Colonic mucosa (tissue), 4 donors: ENCODE measurements at regions of chr12 and their contacts with region 1.

Region 1: DNA sequence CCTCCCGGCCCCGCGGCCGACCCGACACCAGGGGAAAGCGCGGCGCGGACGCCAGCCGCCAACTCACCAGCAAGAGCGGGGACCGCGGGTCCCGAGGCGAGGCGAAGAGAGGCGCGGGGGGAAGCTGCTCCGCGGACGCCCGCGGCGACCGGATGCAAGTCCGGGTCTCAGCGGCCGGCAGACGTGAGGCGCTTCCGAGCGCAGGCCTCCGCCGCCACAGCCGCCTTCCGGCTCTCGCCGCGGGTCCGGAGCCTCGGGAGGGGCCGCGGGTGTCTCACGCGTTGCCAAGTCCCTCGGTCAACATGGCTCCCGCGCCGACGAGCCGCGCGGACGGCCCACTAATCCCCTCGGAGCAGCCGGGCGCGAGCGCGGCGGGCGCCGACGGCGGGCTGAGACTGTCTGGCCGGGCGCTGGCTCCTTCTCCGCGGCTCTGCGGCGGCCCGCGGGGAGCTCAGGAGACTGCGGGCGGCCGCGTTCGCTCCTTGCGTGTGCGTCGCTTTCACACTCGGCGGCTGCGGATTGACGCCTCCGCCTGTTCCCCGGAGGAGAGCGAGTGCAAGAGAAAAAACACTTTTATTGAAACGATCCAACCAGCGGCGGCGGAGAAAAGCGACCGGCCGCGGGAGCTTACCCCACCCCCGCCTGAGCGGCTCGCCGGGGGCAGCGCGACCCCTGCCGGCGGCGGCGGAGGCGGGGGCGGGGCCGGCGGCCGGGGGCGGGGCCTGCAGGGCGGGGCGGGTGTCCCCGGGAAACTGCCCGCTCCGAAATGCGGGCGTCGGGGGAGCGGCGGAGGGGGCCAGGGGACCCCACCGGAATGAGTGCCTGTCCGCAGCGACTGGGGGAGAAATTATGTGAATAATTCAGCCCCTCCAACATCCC is at the start of gene CDK17:
- DNase-seq: peak; percentile 84
- H3K4me3 ChIP-seq: peak within 1 kb of the TSS; percentile 92
- H3K27ac ChIP-seq: peak within 1 kb of the TSS; percentile 100
- H3K4me1 ChIP-seq: no peaks in the 10 kb centered on the region
- H3K27me3 ChIP-seq: no peaks in the 10 kb centered on the region
- CTCF ChIP-seq: no peak
- total RNA-seq, gene CDK17: 13.2 to 23.4 TPM

Region 2: GRCh38 chr12:96061864-96062453 is 338.2 kb before region 1 on chr12:
- intact Hi-C with region 1: loop called (anchors 5 kb)
- DNase-seq: peak; percentile 82
- H3K4me3 ChIP-seq: no peak overlapping the region
- H3K27ac ChIP-seq: no peak overlapping the region
- H3K4me1 ChIP-seq: no peaks in the 10 kb centered on the region
- H3K27me3 ChIP-seq: no peaks in the 10 kb centered on the region
- CTCF ChIP-seq: peak; percentile 79

Region 3: DNA sequence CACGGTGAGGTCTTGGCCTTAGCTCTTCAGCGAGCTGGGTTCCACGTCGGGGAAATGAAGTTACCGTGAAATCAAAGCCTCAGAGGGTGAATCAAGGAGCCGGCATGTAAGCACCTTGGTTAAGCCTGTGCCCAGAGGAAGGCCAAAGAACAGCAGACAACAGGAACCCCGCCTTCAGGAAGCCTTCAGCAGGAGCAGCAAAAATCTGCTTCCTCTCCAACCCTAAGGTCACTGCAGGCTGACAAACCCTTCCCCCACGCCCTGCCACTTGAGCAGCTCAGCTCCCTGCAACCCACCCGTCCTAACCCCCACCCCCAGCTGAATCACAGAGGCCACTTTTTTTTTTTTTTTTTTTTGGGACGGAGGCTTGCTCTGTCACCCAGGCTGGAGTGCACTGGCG is 291.8 kb before region 1 on chr12:
- intact Hi-C with region 1: loop called (anchors 2 kb)
- DNase-seq: peak; percentile 75
- H3K4me3 ChIP-seq: no peak overlapping the region
- H3K27ac ChIP-seq: peak overlapping the region; percentile 24
- H3K4me1 ChIP-seq: no peaks in the 10 kb centered on the region
- H3K27me3 ChIP-seq: no peaks in the 10 kb centered on the region
- CTCF ChIP-seq: no peak

Region 4: GRCh38 chr12:96215919-96216273 is 184.3 kb before region 1 on chr12:
- intact Hi-C with region 1: loop called (anchors 2 kb)
- DNase-seq: no peak
- H3K4me3 ChIP-seq: no peak overlapping the region
- H3K27ac ChIP-seq: no peak overlapping the region
- H3K4me1 ChIP-seq: no peaks in the 10 kb centered on the region
- H3K27me3 ChIP-seq: no peaks in the 10 kb centered on the region
- CTCF ChIP-seq: no peak

Region 5: GRCh38 chr12:96258104-96258961 is 141.8 kb before region 1 on chr12:
- intact Hi-C with region 1: no loop called
- DNase-seq: peak; percentile 37
- H3K4me3 ChIP-seq: no peak overlapping the region
- H3K27ac ChIP-seq: no peak overlapping the region
- H3K4me1 ChIP-seq: no peaks in the 10 kb centered on the region
- H3K27me3 ChIP-seq: no peaks in the 10 kb centered on the region
- CTCF ChIP-seq: no peak

Region 6: DNA sequence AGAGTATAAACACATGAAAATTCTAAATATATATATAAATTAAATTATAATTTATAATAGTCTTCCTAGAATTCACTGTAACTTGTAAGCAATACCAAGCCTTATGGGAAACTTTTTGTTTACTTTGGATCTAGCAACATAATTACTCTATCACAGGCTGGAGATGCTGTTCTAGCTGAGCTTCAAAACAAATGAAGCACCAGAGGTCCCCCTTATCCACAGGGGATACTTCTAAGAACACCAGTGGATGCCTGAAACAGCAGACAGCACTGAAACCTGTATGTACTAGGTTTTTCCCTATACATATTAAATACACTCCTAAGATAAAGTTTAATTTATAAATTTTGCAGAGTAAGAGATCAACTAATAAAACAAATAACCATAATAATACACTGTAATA is 96.5 kb before region 1 on chr12:
- intact Hi-C with region 1: loop called (anchors 10 kb)
- DNase-seq: no peak
- H3K4me3 ChIP-seq: no peak overlapping the region
- H3K27ac ChIP-seq: no peak overlapping the region
- H3K4me1 ChIP-seq: no peaks in the 10 kb centered on the region
- H3K27me3 ChIP-seq: no peaks in the 10 kb centered on the region
- CTCF ChIP-seq: no peak

Region 7: GRCh38 chr12:96343347-96343954 is 56.7 kb before region 1 on chr12:
- intact Hi-C with region 1: loop called (anchors 10 kb)
- DNase-seq: no peak
- H3K4me3 ChIP-seq: no peak overlapping the region
- H3K27ac ChIP-seq: no peak overlapping the region
- H3K4me1 ChIP-seq: no peaks in the 10 kb centered on the region
- H3K27me3 ChIP-seq: no peaks in the 10 kb centered on the region
- CTCF ChIP-seq: no peak

Region 8: DNA sequence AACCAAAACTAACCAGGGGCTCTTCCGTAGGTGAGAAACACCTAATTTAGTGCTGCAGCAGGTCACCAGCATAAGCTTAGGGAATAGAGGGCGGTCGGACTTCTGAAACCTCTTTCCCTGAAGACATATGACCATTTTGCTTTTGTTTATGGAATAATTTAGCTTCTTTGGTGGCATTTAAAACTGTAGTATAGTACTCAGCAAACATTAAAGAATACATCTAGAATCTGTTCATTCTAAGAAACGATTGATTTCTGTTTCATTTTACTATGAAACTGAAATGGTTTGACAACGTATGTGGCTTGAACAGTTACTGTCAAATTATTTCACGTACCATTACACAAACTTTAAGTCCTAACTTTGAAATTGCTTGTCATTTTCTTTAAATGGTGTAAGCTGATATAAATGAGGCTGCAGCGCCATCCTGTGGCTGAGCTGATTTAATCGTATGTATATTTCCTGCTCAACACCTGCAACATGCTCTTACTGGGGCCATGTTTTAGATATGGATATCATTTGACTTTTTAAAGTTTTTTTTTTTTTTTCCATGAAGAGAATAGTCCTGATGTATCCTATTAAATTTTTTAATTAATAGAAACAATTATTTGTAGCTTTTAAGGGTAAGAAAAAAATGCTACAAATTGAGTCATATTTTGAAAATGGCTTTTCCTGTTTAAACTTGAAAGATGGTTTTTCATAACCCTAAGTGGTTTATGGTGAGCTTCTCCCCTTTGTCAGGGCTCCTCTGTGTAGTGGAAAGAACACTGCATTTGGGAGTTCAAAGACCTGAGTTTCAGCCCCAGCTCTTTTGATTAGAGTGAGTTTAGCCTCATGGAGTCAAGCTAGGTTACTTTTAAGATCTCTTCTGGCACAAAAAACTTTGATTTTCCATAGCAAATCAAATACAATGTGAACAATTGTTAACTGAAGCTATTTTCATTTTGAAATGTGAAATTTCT is 116.6 kb after region 1 on chr12:
- intact Hi-C with region 1: loop called (anchors 5 kb)
- DNase-seq: peak; percentile 72
- H3K4me3 ChIP-seq: no peak overlapping the region
- H3K27ac ChIP-seq: no peak overlapping the region
- H3K4me1 ChIP-seq: no peaks in the 10 kb centered on the region
- H3K27me3 ChIP-seq: no peaks in the 10 kb centered on the region
- CTCF ChIP-seq: peak; percentile 62